CD14-positive monocyte (primary cell): ENCODE measurements at regions of chr6 and their contacts with region 1.

Region 1: DNA sequence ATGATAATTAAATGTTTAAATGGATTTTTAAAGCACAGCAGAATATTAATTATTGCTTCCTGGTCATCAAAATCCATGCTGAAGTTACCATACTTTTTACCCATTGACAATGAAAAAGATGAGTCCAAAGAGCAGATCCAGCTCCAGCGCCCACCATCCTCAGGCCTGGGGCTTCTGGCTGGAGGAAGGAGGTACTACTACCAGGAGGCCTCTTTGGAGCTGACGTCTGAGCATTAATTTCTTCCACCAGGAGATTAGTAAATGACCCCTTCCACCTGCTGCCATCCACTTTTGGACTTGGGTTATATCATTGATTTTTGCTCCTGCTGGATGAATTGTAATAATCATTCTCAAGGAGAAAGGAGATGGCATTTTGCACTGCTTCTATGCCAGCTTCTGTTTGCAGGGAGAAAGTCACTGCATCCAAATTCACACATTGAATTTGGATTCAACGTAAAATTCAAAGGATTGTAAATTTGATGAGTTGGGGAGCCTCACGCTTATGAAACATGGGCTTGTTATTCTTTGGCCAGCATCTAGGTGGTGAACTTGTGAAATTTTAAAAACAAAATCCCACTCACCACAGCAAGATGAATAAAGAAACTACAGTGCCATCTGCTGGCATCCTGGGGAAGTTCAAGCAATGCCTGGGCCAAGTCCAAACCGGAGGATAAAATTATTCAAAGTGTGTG is 121.8 kb downstream of the SASH1 start:
- DNase-seq: peak; percentile 19 to 50 (median 46)
- H3K4me3 ChIP-seq: no peak overlapping the region
- H3K4me3 Mint-ChIP-seq: no peak overlapping the region
- H3K27ac ChIP-seq: no peak overlapping the region
- H3K27ac Mint-ChIP-seq: peak overlapping the region in 1 of 7 donors; percentile 51
- H3K4me1 ChIP-seq: peaks cover 0 to 8% of the 10 kb centered on the region in 2 donors
- H3K4me1 Mint-ChIP-seq: peaks cover 24% of the 10 kb centered on the region
- H3K27me3 ChIP-seq: peaks cover 0 to 2% of the 10 kb centered on the region in 2 donors
- H3K27me3 Mint-ChIP-seq: peaks cover 3 to 11% (median 5%) of the 10 kb centered on the region in 3 donors
- CTCF ChIP-seq: peak; percentile 94

Region 2: DNA sequence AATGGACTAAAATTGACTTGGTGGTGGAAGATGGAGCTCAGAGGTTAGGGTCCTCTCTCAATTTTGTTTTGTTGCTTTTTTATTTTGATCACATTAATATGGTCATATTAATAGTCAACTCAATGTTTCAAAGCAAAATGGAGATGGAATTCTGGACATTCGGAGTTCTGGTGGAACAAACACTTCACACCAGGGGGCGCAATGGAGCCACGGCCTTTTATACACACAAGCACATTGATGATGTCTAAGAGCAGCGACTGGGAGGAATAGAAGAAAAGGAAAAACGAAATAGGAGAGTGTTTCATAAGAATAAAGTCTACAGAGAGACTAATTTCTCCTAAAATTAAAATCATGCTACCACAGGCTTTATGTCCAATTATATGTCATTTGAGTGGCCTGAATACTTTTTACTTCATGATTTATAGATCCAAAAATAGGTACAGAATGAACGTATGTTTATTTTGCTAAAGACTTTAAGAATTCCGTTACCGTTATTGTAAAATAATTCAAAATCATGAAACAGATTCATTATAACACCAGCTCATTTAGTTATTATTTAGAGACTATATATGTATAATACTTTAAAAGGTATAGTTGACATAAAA is 319.4 kb before region 1 on chr6:
- intact Hi-C with region 1: loop called in 1 of 2 experiments (anchors 10 kb)
- DNase-seq: peak in 2 of 3 donors; percentile 4 to 23
- H3K4me3 ChIP-seq: no peak overlapping the region
- H3K4me3 Mint-ChIP-seq: no peak overlapping the region
- H3K27ac ChIP-seq: no peak overlapping the region
- H3K27ac Mint-ChIP-seq: no peak overlapping the region
- H3K4me1 ChIP-seq: no peaks in the 10 kb centered on the region
- H3K4me1 Mint-ChIP-seq: no peaks in the 10 kb centered on the region
- H3K27me3 ChIP-seq: peaks cover 0 to 5% of the 10 kb centered on the region in 2 donors
- H3K27me3 Mint-ChIP-seq: peaks cover 2 to 9% (median 4%) of the 10 kb centered on the region in 3 donors
- CTCF ChIP-seq: peak; percentile 87

Region 3: GRCh38 chr6:148177589-148178233 is 286.8 kb before region 1 on chr6:
- intact Hi-C with region 1: loop called (anchors 1 to 10 kb)
- DNase-seq: peak; percentile 3 to 44 (median 38)
- H3K4me3 ChIP-seq: no peak overlapping the region
- H3K4me3 Mint-ChIP-seq: no peak overlapping the region
- H3K27ac ChIP-seq: no peak overlapping the region
- H3K27ac Mint-ChIP-seq: no peak overlapping the region
- H3K4me1 ChIP-seq: no peaks in the 10 kb centered on the region
- H3K4me1 Mint-ChIP-seq: no peaks in the 10 kb centered on the region
- H3K27me3 ChIP-seq: no peaks in the 10 kb centered on the region
- H3K27me3 Mint-ChIP-seq: peaks cover 4 to 6% (median 5%) of the 10 kb centered on the region in 3 donors
- CTCF ChIP-seq: peak; percentile 80

Region 4: GRCh38 chr6:148520109-148520841 is 55.8 kb after region 1 on chr6:
- intact Hi-C with region 1: no loop called
- DNase-seq: no peak
- H3K4me3 ChIP-seq: no peak overlapping the region
- H3K4me3 Mint-ChIP-seq: no peak overlapping the region
- H3K27ac ChIP-seq: no peak overlapping the region
- H3K27ac Mint-ChIP-seq: no peak overlapping the region
- H3K4me1 ChIP-seq: no peaks in the 10 kb centered on the region
- H3K4me1 Mint-ChIP-seq: peaks cover 6% of the 10 kb centered on the region
- H3K27me3 ChIP-seq: no peaks in the 10 kb centered on the region
- H3K27me3 Mint-ChIP-seq: peaks cover 0 to 8% (median 6%) of the 10 kb centered on the region in 3 donors
- CTCF ChIP-seq: no peak

Region 5: DNA sequence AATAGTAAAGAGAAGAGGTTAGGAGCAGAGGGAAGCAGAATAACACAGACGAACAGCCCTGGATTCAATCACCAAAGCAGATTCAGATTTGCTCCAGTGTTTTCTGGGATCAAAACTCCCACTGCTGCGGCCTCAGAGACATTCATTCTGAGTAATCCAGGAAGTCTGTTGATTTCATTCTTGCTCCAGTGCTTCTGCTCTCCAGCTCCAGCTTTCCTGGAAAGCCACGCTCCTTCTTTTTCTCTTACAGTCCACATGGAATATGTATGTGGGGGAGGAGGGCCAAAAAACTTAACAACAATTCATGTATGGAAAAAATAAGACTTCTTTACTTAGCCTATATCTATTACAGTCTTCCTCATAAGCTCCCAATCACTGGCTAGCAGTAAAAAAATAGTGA is 255.9 kb after region 1 on chr6:
- intact Hi-C with region 1: no loop called
- DNase-seq: no peak
- H3K4me3 ChIP-seq: no peak overlapping the region
- H3K4me3 Mint-ChIP-seq: no peak overlapping the region
- H3K27ac ChIP-seq: no peak overlapping the region
- H3K27ac Mint-ChIP-seq: no peak overlapping the region
- H3K4me1 ChIP-seq: no peaks in the 10 kb centered on the region
- H3K4me1 Mint-ChIP-seq: peaks cover 7% of the 10 kb centered on the region
- H3K27me3 ChIP-seq: no peaks in the 10 kb centered on the region
- H3K27me3 Mint-ChIP-seq: peaks cover 0 to 4% (median 3%) of the 10 kb centered on the region in 3 donors
- CTCF ChIP-seq: no peak